PC-9 (cell line): ENCODE measurements at regions of chr3 and their contacts with region 1.

Region 1: GRCh38 chr3:175149675-175150074 is 290.5 kb downstream of the NAALADL2 start:
- DNase-seq: peak in 1 of 2 experiments; percentile 49
- H3K4me3 ChIP-seq: no peak overlapping the region
- H3K27ac ChIP-seq: no peak overlapping the region
- H3K4me1 ChIP-seq: peaks cover 20% of the 10 kb centered on the region
- H3K27me3 ChIP-seq: no peaks in the 10 kb centered on the region
- CTCF ChIP-seq: no peak

Region 2: GRCh38 chr3:174955513-174956001 is 194.1 kb before region 1 on chr3:
- CTCF ChIA-PET with region 1: no interaction called
- POLR2A ChIA-PET with region 1: no interaction called
- intact Hi-C with region 1: loop called (anchors 10 kb)
- DNase-seq: peak; percentile 58 to 90
- H3K4me3 ChIP-seq: no peak overlapping the region
- H3K27ac ChIP-seq: 0 out of 2 replicates have a peak overlapping the region, but pooled peaks have one; percentile 3
- H3K4me1 ChIP-seq: peaks cover 25% of the 10 kb centered on the region
- H3K27me3 ChIP-seq: no peaks in the 10 kb centered on the region
- CTCF ChIP-seq: no peak

Region 3: GRCh38 chr3:175198991-175199783 is 49.5 kb after region 1 on chr3:
- CTCF ChIA-PET with region 1: no interaction called
- POLR2A ChIA-PET with region 1: interaction called, 15 read pairs
- intact Hi-C with region 1: no loop called
- DNase-seq: no peak
- H3K4me3 ChIP-seq: no peak overlapping the region
- H3K27ac ChIP-seq: no peak overlapping the region
- H3K4me1 ChIP-seq: no peaks in the 10 kb centered on the region; the same call in 1 of the 2 replicates
- H3K27me3 ChIP-seq: no peaks in the 10 kb centered on the region
- CTCF ChIP-seq: no peak

Region 4: DNA sequence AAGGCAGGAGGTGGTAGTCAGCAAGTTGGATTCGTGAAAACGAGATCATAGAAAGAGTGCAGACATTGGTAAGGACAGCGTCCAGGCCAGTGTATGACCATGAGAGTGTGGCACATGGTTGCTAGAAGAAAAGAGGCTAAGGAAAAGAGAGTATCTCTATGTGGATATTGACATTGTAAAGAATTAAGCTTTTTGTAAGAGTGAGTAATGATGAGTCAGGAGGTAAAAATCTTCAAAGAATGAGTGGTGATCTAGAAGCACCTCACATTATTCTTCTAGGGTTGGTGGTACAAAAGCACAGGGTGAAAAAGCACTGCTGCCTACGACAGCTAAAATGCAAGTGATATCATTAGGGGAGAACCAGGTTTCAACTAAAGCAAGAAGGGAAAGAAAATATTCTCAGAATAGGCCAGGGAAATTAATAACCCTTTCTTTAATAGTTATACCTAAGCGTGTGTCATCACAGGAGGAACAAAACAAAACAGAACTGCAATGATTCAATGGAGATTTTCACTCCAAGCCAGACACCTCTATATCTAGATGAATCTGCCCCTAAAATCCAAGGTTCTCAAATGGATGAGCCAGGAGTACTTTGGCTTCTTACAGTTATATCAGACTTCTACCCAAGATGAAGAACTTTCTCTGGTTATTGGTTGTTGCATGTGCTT is 594.2 kb after region 1 on chr3:
- CTCF ChIA-PET with region 1: no interaction called
- POLR2A ChIA-PET with region 1: no interaction called
- intact Hi-C with region 1: loop called (anchors 5 kb)
- DNase-seq: peak; percentile 18 to 64
- H3K4me3 ChIP-seq: no peak overlapping the region
- H3K27ac ChIP-seq: no peak overlapping the region
- H3K4me1 ChIP-seq: peaks cover 28% of the 10 kb centered on the region
- H3K27me3 ChIP-seq: no peaks in the 10 kb centered on the region
- CTCF ChIP-seq: no peak

Region 5: DNA sequence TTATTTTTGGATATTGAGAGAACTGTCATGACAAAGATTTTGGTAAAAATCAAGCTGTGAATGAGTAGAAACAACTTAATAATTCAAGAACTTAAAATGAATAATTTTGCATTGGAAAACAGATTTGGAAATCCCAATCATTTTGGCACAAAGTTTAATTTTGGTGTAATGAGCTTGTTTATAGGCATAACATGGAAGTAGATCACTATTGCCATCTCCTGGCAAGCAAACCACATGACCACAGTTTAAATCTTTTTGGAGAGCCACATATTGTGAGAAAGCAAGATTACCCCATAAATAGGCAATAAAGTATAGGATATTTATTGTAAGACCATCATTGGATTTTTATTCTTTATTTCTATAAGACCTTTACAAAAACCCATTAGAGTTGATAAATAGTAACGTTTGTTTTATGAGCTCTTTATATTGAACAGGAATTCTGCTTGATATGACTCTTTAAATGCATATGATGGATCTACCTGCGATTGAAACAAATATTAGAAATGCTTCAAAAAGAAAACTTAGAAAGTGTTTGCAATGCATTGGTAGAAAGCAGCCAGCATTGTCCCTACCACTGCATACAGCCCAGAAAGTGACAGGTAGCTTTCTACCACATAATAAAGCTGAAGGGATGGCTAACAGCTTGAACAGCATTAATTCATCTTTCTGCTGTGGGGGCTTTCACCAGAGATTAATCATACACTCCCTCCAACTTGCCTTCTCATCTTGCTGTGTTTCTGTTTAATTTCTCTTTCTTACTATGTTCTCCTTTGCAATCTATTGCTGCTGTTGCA is 1280.8 kb after region 1 on chr3:
- CTCF ChIA-PET with region 1: interaction called, 3 read pairs
- POLR2A ChIA-PET with region 1: no interaction called
- intact Hi-C with region 1: loop called (anchors 10 kb)
- DNase-seq: peak; percentile 10 to 49
- H3K4me3 ChIP-seq: no peak overlapping the region
- H3K27ac ChIP-seq: no peak overlapping the region
- H3K4me1 ChIP-seq: no peaks in the 10 kb centered on the region
- H3K27me3 ChIP-seq: no peaks in the 10 kb centered on the region
- CTCF ChIP-seq: peak; percentile 89